PC-3 (cell line): ENCODE measurements at regions of chr2 and their contacts with region 1.

Region 1: DNA sequence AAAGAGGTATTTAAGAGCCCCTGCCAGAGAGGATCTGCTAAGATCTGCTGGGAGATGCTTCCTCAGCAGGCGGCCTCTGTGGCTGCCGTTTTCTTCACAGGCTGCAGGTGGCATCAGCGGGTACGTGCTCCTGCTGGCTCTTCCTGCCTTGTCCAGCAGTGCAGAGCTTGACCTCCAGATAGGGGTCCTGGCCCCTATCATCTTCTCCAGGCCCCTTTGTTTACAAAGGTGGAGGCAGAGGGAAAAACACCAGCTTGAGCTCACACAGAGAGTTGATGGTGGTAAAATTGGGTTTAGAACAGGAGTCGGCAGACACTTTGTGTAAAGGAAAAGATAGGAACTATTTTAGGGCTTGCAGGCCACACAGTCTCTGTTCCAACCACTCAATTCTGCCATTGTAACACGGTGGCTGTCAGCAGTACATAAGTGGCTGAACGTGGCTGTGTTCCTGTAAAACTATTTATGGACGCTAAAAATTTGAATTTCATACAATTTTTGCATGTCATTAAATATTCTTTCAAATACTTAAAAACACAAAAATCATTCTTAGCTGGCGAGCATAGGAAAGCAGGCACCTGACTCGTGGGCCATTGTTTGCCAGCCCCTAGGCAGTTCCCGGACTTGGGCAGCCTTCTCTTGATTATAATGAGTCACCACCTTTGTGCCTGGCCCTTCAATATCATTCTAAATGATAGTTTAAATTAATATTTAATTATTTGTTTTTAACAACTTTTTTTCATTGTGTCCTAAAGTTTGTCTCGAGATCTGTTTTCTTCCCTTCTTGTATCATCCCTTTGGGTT is 98.2 kb upstream of the B3GNT7 start:
- DNase-seq: peak; percentile 68
- ATAC-seq: peak; percentile 57
- H3K4me3 ChIP-seq: no peak overlapping the region
- H3K27ac ChIP-seq: peak overlapping the region; percentile 39
- H3K4me1 ChIP-seq: peaks cover 32% of the 10 kb centered on the region
- H3K27me3 ChIP-seq: no peaks in the 10 kb centered on the region
- CTCF ChIP-seq: peak; percentile 86

Region 2: DNA sequence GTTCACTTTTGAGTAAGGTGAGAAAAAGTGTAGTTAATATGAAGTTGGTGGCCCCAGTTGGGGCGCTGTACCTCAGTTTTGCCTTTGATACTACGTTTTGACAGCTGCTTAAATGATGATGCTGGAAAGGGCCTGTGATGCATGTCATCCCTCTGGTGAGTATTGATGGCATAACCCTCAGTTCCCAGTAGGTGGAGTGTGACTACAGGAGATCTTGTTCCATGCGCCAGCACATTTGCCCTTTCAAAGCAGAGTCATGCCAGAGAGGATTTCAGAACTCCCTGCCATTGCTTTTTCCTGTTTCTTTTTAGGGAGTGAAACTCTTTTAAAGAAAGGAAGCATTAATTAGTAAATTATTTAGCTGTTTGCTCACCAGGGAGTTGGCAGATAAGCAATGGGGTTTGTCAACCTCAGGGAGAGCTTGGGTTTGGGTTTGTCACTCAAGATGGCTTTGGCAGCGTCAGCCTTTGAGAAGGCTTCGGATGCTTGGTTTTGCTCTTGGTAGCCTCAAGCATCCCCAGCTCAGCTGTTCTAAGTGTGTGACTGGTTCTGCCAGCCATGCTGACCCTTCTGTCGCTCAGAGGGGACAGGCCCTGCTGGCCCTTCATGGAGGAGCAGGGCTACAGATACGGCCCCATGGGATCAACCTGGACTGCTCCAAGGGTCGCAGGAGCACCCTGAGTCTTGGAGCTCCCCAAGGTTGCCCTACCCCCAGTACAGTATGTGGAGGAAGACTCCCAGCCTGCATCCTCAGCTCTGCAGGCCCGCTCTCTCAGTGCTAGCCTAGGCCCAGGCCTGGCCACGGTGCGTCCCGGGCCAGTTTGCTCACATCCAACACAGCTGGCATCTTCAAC is 69.8 kb before region 1 on chr2:
- CTCF ChIA-PET with region 1: no interaction called
- POLR2A ChIA-PET with region 1: no interaction called
- intact Hi-C with region 1: loop called (anchors 1 kb)
- DNase-seq: peak; percentile 84
- ATAC-seq: peak; percentile 97
- H3K4me3 ChIP-seq: no peak overlapping the region
- H3K27ac ChIP-seq: no peak overlapping the region
- H3K4me1 ChIP-seq: no peaks in the 10 kb centered on the region
- H3K27me3 ChIP-seq: no peaks in the 10 kb centered on the region
- CTCF ChIP-seq: peak; percentile 89

Region 3: GRCh38 chr2:231364961-231365810 is 67.9 kb after region 1 on chr2:
- CTCF ChIA-PET with region 1: no interaction called
- POLR2A ChIA-PET with region 1: interaction called, 3 read pairs
- intact Hi-C with region 1: loop called (anchors 1 kb)
- DNase-seq: peak; percentile 98
- ATAC-seq: peak; percentile 93
- H3K4me3 ChIP-seq: no peak overlapping the region
- H3K27ac ChIP-seq: peak overlapping the region; percentile 100
- H3K4me1 ChIP-seq: peaks cover 33% of the 10 kb centered on the region
- H3K27me3 ChIP-seq: no peaks in the 10 kb centered on the region
- CTCF ChIP-seq: no peak

Region 4: GRCh38 chr2:231387904-231388724 is 90.8 kb after region 1 on chr2:
- CTCF ChIA-PET with region 1: interaction called, 3 read pairs
- POLR2A ChIA-PET with region 1: no interaction called
- intact Hi-C with region 1: loop called (anchors 5 kb)
- DNase-seq: peak; percentile 90
- ATAC-seq: peak; percentile 89
- H3K4me3 ChIP-seq: no peak overlapping the region
- H3K27ac ChIP-seq: peak overlapping the region; percentile 85
- H3K4me1 ChIP-seq: peaks cover 36% of the 10 kb centered on the region
- H3K27me3 ChIP-seq: no peaks in the 10 kb centered on the region
- CTCF ChIP-seq: peak; percentile 31; the same call in 1 of the 2 replicates

Region 5: GRCh38 chr2:231399853-231400680 is 102.8 kb after region 1 on chr2:
- CTCF ChIA-PET with region 1: interaction called, 12 read pairs
- POLR2A ChIA-PET with region 1: interaction called, 4 read pairs
- intact Hi-C with region 1: loop called (anchors 1 kb)
- DNase-seq: peak; percentile 67
- ATAC-seq: peak; percentile 92
- H3K4me3 ChIP-seq: no peak overlapping the region
- H3K27ac ChIP-seq: peak overlapping the region; percentile 66
- H3K4me1 ChIP-seq: peaks cover 37% of the 10 kb centered on the region
- H3K27me3 ChIP-seq: no peaks in the 10 kb centered on the region
- CTCF ChIP-seq: no peak

Region 6: DNA sequence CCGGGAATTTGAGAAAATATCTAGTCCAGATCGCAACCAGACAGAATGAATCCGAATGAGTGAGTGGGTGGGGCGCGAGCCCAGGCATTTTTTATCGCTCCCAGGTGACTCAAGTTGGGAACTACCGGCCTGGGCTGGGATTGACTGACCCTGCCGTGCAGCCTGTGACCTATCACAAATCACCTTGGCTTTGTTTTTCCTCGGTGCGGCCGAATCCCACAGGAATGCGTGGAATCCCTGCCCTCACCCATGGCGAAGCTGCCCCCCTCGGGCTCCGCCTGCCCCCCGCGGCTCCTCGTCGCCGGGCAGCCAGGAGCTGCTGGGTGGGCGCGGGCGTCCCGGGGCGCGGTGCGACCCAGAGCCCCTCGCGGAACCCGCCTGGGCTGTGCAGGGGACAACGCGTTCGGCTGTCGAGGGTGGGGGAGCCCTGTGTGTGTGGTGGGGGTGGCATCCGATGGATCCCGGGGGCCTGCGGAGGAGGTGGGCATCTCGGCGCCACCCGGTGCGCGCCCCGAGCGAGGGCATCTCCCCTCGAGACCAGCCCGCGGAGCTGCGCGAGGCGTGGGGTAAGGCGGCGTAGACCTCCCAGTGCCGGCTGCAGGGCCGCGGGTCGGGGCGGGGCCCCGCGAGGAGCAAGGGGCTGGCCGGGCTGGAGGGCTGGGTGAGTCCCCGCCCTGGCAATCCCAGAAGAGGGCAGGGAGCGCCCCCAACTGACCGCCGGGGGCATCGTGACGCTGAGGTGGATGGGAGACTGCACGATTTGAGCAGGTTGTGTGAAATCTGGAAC is 114.7 kb after region 1 on chr2:
- CTCF ChIA-PET with region 1: interaction called, 15 read pairs
- POLR2A ChIA-PET with region 1: no interaction called
- intact Hi-C with region 1: loop called (anchors 1 kb)
- DNase-seq: peak; percentile 91
- ATAC-seq: peak; percentile 97
- H3K4me3 ChIP-seq: peak overlapping the region; percentile 85
- H3K27ac ChIP-seq: peak overlapping the region; percentile 77
- H3K4me1 ChIP-seq: peaks cover 14% of the 10 kb centered on the region
- H3K27me3 ChIP-seq: no peaks in the 10 kb centered on the region
- CTCF ChIP-seq: peak; percentile 93